ENCODE measurements at regions of chr9 and their contacts with region 1.

Region 1: GRCh38 chr9:107251756-107252322 is 31.2 kb upstream of the RAD23B start:
- DNase-seq: peak; percentile 44
- H3K4me3 ChIP-seq: no peak overlapping the region
- H3K27ac ChIP-seq: no peak overlapping the region
- H3K4me1 ChIP-seq: peaks cover 34% of the 10 kb centered on the region
- H3K27me3 ChIP-seq: no peaks in the 10 kb centered on the region
- CTCF ChIP-seq: no peak

Region 2: GRCh38 chr9:107269681-107270080 is 17.8 kb after region 1 on chr9:
- CTCF ChIA-PET with region 1: no interaction called
- dilution Hi-C with region 1: no loop called
- in situ Hi-C with region 1: no loop called
- intact Hi-C with region 1: loop called (anchors 1 kb)
- DNase-seq: no peak
- H3K4me3 ChIP-seq: no peak overlapping the region
- H3K27ac ChIP-seq: no peak overlapping the region
- H3K4me1 ChIP-seq: peaks cover 33% of the 10 kb centered on the region
- H3K27me3 ChIP-seq: no peaks in the 10 kb centered on the region
- CTCF ChIP-seq: no peak

Region 3: DNA sequence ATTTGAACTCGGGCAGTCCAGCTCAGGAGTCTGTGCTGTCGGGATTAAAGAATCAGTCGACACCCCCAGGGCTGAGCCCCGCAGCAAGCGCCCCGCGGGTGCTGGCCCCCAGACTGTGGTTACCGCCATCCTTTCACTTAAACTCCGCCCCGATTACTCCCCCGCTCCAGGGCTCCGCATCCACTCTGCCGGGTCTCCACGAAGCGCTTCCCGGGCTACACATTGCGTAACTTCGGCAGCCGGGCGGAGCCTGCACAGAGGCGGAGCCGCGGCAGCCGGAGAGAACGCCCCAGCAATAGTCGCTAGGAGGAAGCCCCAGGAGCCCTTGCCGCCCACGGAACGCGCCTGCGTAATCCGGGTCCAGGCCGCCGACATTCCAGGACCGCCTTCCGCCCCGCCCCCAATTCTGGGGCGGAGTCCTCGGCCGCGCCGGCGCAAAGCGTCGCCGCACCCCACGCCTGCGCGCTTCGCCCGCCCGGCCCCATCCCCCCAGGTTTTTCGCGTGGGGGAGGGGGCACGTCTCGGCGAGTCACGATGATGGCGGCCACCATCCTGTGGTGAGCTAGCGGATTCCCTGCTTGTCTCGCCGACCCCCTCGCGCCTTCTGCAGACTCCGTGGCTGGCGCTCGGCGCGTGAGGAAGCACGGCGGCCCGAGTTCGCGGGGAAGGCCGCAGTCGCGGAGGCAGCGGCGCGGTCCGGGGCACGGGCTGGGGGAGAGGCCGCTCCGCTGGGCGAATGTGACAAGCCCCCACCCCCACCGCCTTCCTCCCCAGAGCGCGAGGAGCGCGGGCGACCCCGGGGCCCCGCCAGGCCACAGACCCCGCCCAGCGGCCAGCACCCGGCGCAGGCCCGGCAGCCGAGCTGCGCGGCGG is 31.1 kb after region 1 on chr9 and contains the start of gene RAD23B:
- CTCF ChIA-PET with region 1: no interaction called
- dilution Hi-C with region 1: no loop called
- in situ Hi-C with region 1: no loop called
- intact Hi-C with region 1: loop called (anchors 1 kb)
- DNase-seq: peak; percentile 99
- H3K4me3 ChIP-seq: peak within 1 kb of the TSS; percentile 91 to 93 (median 92)
- H3K27ac ChIP-seq: peak within 1 kb of the TSS; percentile 83
- H3K4me1 ChIP-seq: peaks cover 28% of the 10 kb centered on the region
- H3K27me3 ChIP-seq: no peaks in the 10 kb centered on the region
- CTCF ChIP-seq: no peak
- total RNA-seq, gene RAD23B: 126 to 177 TPM

Region 4: GRCh38 chr9:107309271-107309670 is 57.4 kb after region 1 on chr9:
- CTCF ChIA-PET with region 1: no interaction called
- dilution Hi-C with region 1: loop called (anchors 5 kb)
- in situ Hi-C with region 1: no loop called
- intact Hi-C with region 1: no loop called
- DNase-seq: no peak
- H3K4me3 ChIP-seq: no peak overlapping the region
- H3K27ac ChIP-seq: no peak overlapping the region
- H3K4me1 ChIP-seq: no peaks in the 10 kb centered on the region
- H3K27me3 ChIP-seq: no peaks in the 10 kb centered on the region
- CTCF ChIP-seq: no peak

Measured in mammary epithelial cell (primary cell).